Posterior vena cava (tissue), 2 donors: ENCODE measurements at regions of chr3 and their contacts with region 1.

Region 1: GRCh38 chr3:24052446-24052845 is 107.4 kb downstream of the NR1D2 start:
- DNase-seq: no peak

Region 2: GRCh38 chr3:23648326-23648995 is 404.0 kb before region 1 on chr3:
- intact Hi-C with region 1: loop called in 1 of 2 experiments (anchors 10 kb)
- DNase-seq: no peak

Region 3: GRCh38 chr3:23819599-23820360 is 232.7 kb before region 1 on chr3:
- intact Hi-C with region 1: no loop called
- DNase-seq: no peak